PC-3 (cell line): ENCODE measurements at regions of chrX and their contacts with region 1.

Region 1: DNA sequence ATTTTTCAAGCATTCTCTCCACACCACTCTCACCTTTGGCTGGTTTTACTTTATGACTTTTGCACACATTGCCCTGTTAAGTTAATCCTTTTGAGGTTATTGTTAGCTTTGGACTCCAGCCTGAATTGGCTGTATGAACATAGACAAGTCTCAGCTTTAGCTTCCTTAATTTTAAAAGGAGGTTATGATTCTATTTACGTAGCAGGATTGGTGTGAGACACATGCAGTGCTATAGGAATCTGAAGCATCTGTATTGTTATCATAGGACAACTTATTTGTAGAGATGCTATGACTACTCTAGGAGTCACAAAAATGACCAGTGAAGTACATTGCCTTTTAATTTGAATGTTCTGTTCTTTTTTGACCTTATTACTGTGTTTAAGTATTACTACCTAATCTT is 15.7 kb downstream of the PGAM4 start:
- DNase-seq: peak; percentile 54
- ATAC-seq: peak; percentile 96
- H3K4me3 ChIP-seq: no peak overlapping the region
- H3K27ac ChIP-seq: no peak overlapping the region
- H3K4me1 ChIP-seq: peaks cover 12% of the 10 kb centered on the region
- H3K27me3 ChIP-seq: no peaks in the 10 kb centered on the region
- CTCF ChIP-seq: no peak

Region 2: GRCh38 chrX:77527233-77528001 is 426.3 kb before region 1 on chrX:
- CTCF ChIA-PET with region 1: no interaction called
- POLR2A ChIA-PET with region 1: no interaction called
- intact Hi-C with region 1: no loop called
- DNase-seq: no peak
- ATAC-seq: no peak
- H3K4me3 ChIP-seq: no peak overlapping the region
- H3K27ac ChIP-seq: no peak overlapping the region
- H3K4me1 ChIP-seq: no peaks in the 10 kb centered on the region
- H3K27me3 ChIP-seq: no peaks in the 10 kb centered on the region
- CTCF ChIP-seq: no peak

Region 3: DNA sequence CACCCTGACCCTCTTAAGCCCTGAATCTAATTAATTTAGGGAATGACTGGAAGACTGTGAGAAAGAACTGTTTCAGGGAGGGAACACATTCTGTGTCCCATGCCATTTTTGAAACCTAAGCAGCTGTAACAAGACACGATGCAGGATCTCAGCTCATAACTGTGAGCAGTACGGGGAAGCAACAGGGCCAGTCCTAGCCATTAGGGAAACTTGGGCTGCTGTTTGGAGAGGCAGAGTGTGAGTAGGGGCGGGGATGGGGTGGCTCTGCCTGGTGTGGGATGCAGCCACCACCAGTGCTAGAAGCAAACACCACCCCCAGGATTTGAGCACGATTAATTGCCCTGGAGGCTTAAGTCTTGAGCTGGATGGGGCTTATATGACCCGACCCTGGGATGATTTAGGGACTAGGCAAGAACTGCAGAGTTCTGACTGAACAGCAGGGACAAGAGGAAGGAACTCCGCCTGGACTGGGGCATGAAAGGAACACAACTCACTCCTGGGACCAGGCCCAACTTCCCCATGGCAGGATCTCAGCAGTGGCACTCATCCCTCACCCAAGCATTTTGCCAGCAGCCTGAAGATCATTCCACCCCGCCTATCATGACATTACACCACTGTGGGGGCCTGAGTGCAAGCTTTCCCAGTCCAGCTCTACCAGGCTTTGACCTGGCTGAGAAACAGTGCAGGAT is 210.8 kb before region 1 on chrX:
- CTCF ChIA-PET with region 1: no interaction called
- POLR2A ChIA-PET with region 1: no interaction called
- intact Hi-C with region 1: no loop called
- DNase-seq: no peak
- ATAC-seq: peak; percentile 22
- H3K4me3 ChIP-seq: no peak overlapping the region
- H3K27ac ChIP-seq: no peak overlapping the region
- H3K4me1 ChIP-seq: no peaks in the 10 kb centered on the region
- H3K27me3 ChIP-seq: no peaks in the 10 kb centered on the region
- CTCF ChIP-seq: no peak

Region 4: GRCh38 chrX:77937271-77937670 is 16.4 kb before region 1 on chrX:
- CTCF ChIA-PET with region 1: no interaction called
- POLR2A ChIA-PET with region 1: no interaction called
- intact Hi-C with region 1: loop called (anchors 2 kb)
- DNase-seq: peak; percentile 92
- ATAC-seq: peak; percentile 94
- H3K4me3 ChIP-seq: peak overlapping the region; percentile 27
- H3K27ac ChIP-seq: peak overlapping the region; percentile 72
- H3K4me1 ChIP-seq: peaks cover 22% of the 10 kb centered on the region
- H3K27me3 ChIP-seq: no peaks in the 10 kb centered on the region
- CTCF ChIP-seq: no peak